Calu3 (cell line): ENCODE measurements at regions of chr2 and their contacts with region 1.

Region 1: GRCh38 chr2:229910832-229911412 is 10.9 kb downstream of the TRIP12 start:
- DNase-seq: no peak
- H3K4me3 Mint-ChIP-seq: no peak overlapping the region
- H3K27ac Mint-ChIP-seq: no peak overlapping the region
- H3K4me1 Mint-ChIP-seq: peaks cover 17% of the 10 kb centered on the region
- H3K27me3 Mint-ChIP-seq: no peaks in the 10 kb centered on the region
- CTCF ChIP-seq: peak; percentile 19

Region 2: DNA sequence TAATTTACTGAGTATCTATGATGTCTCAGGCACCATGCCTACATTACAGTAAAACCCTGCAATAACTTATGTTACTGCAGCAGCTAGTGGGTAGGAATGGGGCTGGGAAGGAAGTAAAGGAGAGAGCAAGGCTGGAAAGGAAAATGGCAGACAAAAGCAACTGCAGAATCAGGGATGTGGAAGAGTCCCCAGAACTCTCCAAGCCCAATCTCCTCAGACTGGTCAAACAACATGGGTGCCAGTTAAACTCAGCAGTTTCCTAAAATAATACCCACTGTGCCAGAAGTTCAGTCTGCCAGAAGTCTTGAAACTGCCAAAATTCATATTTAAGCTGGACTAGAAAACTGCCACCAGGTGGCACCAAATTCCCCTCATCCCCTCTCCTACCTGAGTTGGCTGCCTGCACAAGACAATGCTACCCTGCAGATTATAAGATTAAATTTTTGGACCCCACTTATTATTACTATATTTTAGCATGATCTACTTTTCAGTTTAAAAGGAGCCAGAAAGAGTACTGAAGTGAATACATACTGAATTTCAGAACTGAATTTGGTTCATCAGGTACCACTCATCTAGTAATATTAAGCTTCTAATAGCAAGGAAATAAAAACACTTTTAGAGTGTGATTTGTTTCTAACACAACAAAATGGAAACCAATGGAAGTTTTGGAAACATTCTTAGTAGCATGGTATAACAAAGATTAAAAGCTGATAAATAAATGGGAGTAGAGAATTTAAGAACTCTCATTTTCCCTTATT is 109.7 kb before region 1 on chr2:
- CTCF ChIA-PET with region 1: no interaction called
- intact Hi-C with region 1: loop called (anchors 5 kb)
- DNase-seq: peak; percentile 64
- H3K4me3 Mint-ChIP-seq: no peak overlapping the region
- H3K27ac Mint-ChIP-seq: no peak overlapping the region
- H3K4me1 Mint-ChIP-seq: peaks cover 10% of the 10 kb centered on the region
- H3K27me3 Mint-ChIP-seq: no peaks in the 10 kb centered on the region
- CTCF ChIP-seq: peak; percentile 82

Region 3: DNA sequence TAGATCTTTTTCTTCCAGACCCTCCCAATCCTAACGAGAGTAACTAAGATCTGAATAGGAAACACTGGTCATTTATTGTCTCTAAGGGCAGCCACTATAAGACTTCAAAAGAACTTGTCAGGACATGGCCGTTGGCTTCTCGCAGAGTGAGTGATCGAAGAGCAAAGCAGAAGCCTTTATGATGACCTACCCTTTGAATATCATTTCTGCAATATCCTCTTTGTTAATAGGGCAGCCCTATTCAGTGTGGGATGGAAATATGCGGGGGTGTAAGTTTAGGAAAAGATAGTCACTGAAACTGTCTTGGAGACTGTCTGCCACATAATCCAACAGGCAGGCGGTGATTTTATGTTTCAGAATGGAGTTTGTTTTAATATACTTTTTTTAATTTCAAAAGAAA is 82.3 kb after region 1 on chr2:
- CTCF ChIA-PET with region 1: no interaction called
- intact Hi-C with region 1: no loop called
- DNase-seq: no peak
- H3K4me3 Mint-ChIP-seq: no peak overlapping the region
- H3K27ac Mint-ChIP-seq: no peak overlapping the region
- H3K4me1 Mint-ChIP-seq: no peaks in the 10 kb centered on the region
- H3K27me3 Mint-ChIP-seq: no peaks in the 10 kb centered on the region
- CTCF ChIP-seq: no peak